OCI-LY7 (cell line): ENCODE measurements at regions of chr4 and their contacts with region 1.

Region 1: GRCh38 chr4:185640811-185641675 is 105.7 kb upstream of the PDLIM3 start:
- DNase-seq: peak; percentile 81
- H3K4me3 ChIP-seq: no peak overlapping the region
- H3K27ac ChIP-seq: no peak overlapping the region
- H3K4me1 ChIP-seq: no peaks in the 10 kb centered on the region
- CTCF ChIP-seq: peak; percentile 84

Region 2: GRCh38 chr4:185672618-185673017 is 31.6 kb after region 1 on chr4:
- CTCF ChIA-PET with region 1: no interaction called
- POLR2A ChIA-PET with region 1: no interaction called
- intact Hi-C with region 1: no loop called
- DNase-seq: no peak
- H3K4me3 ChIP-seq: no peak overlapping the region
- H3K27ac ChIP-seq: no peak overlapping the region
- H3K4me1 ChIP-seq: no peaks in the 10 kb centered on the region
- CTCF ChIP-seq: no peak

Region 3: GRCh38 chr4:186021461-186022167 is 380.6 kb after region 1 on chr4:
- CTCF ChIA-PET with region 1: interaction called, 3 read pairs
- POLR2A ChIA-PET with region 1: no interaction called
- intact Hi-C with region 1: loop called (anchors 1 kb)
- DNase-seq: peak; percentile 44
- H3K4me3 ChIP-seq: no peak overlapping the region
- H3K27ac ChIP-seq: no peak overlapping the region
- H3K4me1 ChIP-seq: no peaks in the 10 kb centered on the region
- CTCF ChIP-seq: peak; percentile 81

Region 4: GRCh38 chr4:186037692-186038658 is 396.9 kb after region 1 on chr4:
- CTCF ChIA-PET with region 1: interaction called, 11 read pairs
- POLR2A ChIA-PET with region 1: interaction called, 8 read pairs
- intact Hi-C with region 1: loop called (anchors 1 kb)
- DNase-seq: peak; percentile 73
- H3K4me3 ChIP-seq: no peak overlapping the region
- H3K27ac ChIP-seq: no peak overlapping the region
- H3K4me1 ChIP-seq: no peaks in the 10 kb centered on the region
- CTCF ChIP-seq: peak; percentile 89

Region 5: DNA sequence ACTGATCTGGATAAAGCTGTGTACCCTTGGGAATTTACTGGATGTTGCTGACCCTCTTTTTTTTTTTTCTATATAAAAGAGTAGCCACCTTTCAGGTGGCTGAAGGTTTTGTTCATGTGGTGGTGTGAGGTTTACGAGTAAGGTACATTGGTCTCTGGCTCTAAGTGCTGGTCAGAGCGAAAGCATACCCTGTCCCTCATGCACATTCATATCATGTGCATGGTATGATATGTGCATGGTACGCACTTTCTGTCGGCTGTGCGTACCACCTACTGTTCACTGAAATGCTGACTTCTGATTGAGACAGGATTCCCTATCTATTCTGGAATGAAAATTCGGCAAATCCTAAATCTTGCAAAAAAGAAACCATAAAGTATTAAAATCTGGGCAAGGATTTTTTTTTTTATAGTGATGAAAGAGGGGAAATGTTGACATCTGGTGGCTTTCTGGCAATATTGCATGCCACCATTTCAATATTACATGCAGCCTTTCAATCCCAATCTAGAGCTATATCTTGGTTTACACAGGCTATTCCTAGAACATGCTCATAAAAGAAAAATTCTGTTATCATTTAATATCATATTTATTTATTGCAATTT is 496.3 kb after region 1 on chr4:
- CTCF ChIA-PET with region 1: no interaction called
- POLR2A ChIA-PET with region 1: no interaction called
- intact Hi-C with region 1: loop called (anchors 10 kb)
- DNase-seq: peak; percentile 33
- H3K4me3 ChIP-seq: no peak overlapping the region
- H3K27ac ChIP-seq: no peak overlapping the region
- H3K4me1 ChIP-seq: no peaks in the 10 kb centered on the region
- CTCF ChIP-seq: peak; percentile 84